Aorta (tissue), 5 donors: ENCODE measurements at regions of chr18 and their contacts with region 1.

Region 1: DNA sequence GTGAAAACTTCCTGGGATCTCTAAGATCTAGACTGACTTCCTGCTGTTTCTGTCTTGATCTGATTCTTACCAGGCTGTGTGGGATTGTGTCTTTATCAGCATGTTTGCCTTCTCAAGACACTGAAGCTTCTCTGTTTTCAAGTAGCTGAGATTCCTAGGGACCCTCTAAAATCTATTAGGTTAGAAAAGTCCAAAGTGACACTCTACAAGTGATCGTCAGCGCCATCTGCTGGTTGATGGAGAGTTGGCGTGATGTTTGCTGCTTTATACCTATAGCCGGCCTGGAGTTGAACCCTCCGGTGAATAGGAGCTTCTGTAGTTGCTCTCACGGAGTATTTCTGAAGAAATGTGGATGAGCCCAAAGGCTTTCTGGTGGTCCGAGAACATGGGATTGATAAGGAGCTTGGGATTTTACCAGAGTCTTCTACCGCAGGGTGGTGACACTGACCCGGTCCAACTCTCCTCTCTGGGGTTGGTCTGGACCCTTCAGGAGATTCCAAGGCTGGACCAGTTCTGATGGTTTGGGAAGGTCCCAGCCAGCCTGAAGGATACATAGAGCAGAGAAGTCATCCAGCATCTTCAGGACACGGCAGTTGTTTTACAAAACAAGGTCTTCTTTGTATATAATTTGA is 96.0 kb upstream of the TTC39C start:
- DNase-seq: peak; percentile 76 to 89
- ATAC-seq: peak; percentile 83
- H3K4me3 ChIP-seq: no peak overlapping the region
- H3K27ac ChIP-seq: no peak overlapping the region
- H3K4me1 ChIP-seq: no peaks in the 10 kb centered on the region
- H3K27me3 ChIP-seq: no peaks in the 10 kb centered on the region

Region 2: DNA sequence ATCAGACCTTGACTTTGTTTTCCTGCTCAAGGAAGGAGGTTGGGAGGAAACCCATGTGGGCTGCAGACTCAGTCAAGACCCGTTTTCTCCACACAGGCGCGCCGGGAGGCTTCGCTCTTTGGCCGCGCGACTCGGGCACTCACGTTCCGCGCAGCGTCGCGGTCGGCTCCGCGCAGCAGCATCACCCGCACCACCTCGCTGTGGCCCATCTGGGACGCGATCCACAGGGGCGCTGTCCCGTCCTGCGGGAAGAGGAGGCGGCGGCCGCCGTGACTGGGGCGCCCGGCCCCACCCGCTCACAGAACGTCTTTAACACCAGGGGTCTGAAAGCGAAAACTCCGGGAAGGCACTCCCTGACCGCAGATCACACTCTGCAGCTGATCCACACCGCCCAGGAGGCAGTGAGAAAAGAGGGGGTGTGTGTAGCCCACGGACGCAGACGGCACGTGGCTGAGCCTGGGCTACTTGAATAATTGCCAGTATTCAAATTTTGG is 299.1 kb before region 1 on chr18:
- intact Hi-C with region 1: loop called (anchors 1 to 5 kb)
- DNase-seq: peak; percentile 57 to 75
- ATAC-seq: peak; percentile 79
- H3K4me3 ChIP-seq: peak overlapping the region in 1 of 2 donors; percentile 56
- H3K27ac ChIP-seq: no peak overlapping the region
- H3K4me1 ChIP-seq: no peaks in the 10 kb centered on the region
- H3K27me3 ChIP-seq: no peaks in the 10 kb centered on the region

Region 3: GRCh38 chr18:23812546-23813440 is 105.7 kb before region 1 on chr18:
- intact Hi-C with region 1: loop called (anchors 5 to 10 kb)
- DNase-seq: no peak
- ATAC-seq: no peak
- H3K4me3 ChIP-seq: no peak overlapping the region
- H3K27ac ChIP-seq: no peak overlapping the region
- H3K4me1 ChIP-seq: no peaks in the 10 kb centered on the region
- H3K27me3 ChIP-seq: no peaks in the 10 kb centered on the region

Region 4: GRCh38 chr18:23828426-23828825 is 90.1 kb before region 1 on chr18:
- intact Hi-C with region 1: loop called in 1 of 2 experiments (anchors 5 kb)
- DNase-seq: no peak
- ATAC-seq: no peak
- H3K4me3 ChIP-seq: no peak overlapping the region
- H3K27ac ChIP-seq: no peak overlapping the region
- H3K4me1 ChIP-seq: peaks cover 0 to 7% of the 10 kb centered on the region in 2 donors
- H3K27me3 ChIP-seq: no peaks in the 10 kb centered on the region

Region 5: GRCh38 chr18:23998811-23999210 is 80.3 kb after region 1 on chr18:
- intact Hi-C with region 1: no loop called
- DNase-seq: no peak
- ATAC-seq: no peak
- H3K4me3 ChIP-seq: no peak overlapping the region
- H3K27ac ChIP-seq: no peak overlapping the region
- H3K4me1 ChIP-seq: no peaks in the 10 kb centered on the region
- H3K27me3 ChIP-seq: no peaks in the 10 kb centered on the region

Region 6: DNA sequence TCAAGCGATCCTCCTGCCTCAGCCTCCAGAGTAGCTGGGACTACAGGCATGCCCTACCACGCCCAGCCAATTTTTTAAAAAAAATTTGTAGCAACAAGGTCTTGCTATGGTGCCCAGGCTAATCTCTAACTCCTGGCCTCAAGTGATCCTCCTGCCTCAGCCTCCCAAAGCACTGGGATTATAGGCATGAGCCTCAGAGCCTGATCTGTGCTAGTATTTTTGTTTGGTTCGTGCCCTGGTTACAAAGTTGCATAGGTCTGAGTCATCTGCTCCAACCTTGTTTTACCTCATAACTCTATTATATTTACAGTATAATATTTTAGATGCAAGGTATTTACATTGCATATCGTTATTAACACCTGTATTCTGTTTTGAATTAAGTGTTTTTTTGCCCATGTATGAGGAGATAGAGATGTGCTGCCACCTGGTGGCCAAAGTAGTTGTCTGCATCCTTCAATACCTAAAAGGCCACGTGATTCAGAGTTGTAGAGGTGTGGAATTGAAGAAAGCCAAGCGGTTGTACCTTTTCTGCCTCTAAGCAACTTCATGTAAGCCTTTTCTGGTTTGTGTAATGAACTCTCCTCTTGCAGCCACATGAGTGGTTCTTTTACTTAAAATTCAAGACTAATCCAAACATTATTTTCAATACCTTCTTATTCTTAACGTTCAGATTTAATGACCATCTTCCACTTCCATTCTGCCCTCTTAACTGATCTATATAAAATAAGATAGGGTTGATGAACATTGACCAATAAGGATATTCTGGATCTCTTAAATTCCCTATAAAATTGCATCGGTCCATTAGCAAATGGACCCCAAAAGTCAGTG is 200.4 kb after region 1 on chr18:
- intact Hi-C with region 1: loop called in 1 of 2 experiments (anchors 5 kb)
- DNase-seq: peak; percentile 74 to 79
- ATAC-seq: peak; percentile 80
- H3K4me3 ChIP-seq: no peak overlapping the region
- H3K27ac ChIP-seq: no peak overlapping the region
- H3K4me1 ChIP-seq: no peaks in the 10 kb centered on the region
- H3K27me3 ChIP-seq: no peaks in the 10 kb centered on the region